Thyroid gland (tissue), 4 donors: ENCODE measurements at regions of chr1 and their contacts with region 1.

Region 1: DNA sequence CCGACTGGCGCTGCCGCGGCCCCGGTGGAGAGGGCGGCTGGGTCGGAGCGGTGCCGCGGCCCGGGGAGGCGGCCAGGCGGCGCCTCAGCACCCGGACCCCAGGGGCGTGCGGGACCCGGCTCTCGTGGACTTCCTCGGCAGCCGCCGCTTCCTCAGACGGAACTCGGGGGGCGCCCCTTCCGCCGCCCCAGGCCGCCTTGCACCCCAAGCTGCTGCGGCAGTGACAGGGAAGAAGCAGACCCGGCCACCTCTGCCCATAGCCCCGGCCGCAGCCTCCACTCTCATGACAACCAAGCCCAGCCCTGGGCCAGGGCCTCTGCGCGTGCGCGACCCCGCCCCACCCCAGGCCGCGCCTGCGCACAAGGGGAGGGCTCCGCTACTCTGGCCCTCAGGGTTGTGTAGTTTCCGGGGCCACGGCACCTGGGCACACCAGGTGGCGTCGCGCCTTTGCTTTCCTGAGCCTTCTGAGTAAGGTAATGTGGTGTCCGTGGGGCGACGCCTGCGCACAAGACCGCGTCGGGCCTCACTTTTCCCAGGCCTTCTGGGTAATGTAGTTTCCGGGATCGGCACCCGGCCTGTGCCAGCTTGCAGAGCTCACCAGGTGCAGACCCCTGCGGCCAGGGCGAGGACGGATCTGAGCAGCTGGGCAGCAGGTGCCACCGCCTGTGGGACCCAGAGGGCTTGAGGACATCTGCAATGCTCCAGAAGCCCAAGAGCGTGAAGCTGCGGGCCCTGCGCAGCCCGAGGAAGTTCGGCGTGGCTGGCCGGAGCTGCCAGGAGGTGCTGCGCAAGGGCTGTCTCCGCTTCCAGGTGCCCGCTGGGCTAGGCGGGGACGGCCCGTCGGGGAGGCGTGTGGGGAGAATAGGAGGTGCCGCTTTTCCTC is at the starts of genes CEP104 and DFFB:
- DNase-seq: peak; percentile 99
- H3K4me3 ChIP-seq: peak within 1 kb of the TSS; percentile 56 to 89 (median 64)
- H3K27ac ChIP-seq: peak within 1 kb of the TSS; percentile 60 to 72 (median 63)
- H3K4me1 ChIP-seq: peaks cover 18 to 23% of the 10 kb centered on the region in 2 donors
- H3K27me3 ChIP-seq: no peaks in the 10 kb centered on the region
- CTCF ChIP-seq: peak in 4 of 6 experiments; percentile 32 to 72 (median 46)
- POLR2A ChIP-seq: peak; percentile 35 to 92
- total RNA-seq, gene CEP104: 26.0 to 41.6 (median 30.8) TPM
- total RNA-seq, gene DFFB: 5.1 to 8.6 (median 6.8) TPM

Region 2: GRCh38 chr1:3899754-3900118 is 42.6 kb after region 1 on chr1:
- intact Hi-C with region 1: loop called (anchors 5 kb)
- DNase-seq: peak in 1 of 2 donors; percentile 12
- H3K4me3 ChIP-seq: peak overlapping the region; percentile 52 to 95 (median 78)
- H3K27ac ChIP-seq: peak overlapping the region; percentile 88 to 99 (median 97)
- H3K4me1 ChIP-seq: peaks cover 4 to 10% of the 10 kb centered on the region in 2 donors
- H3K27me3 ChIP-seq: no peaks in the 10 kb centered on the region
- CTCF ChIP-seq: peak in 1 of 6 experiments; percentile 7
- POLR2A ChIP-seq: no peak

Region 3: GRCh38 chr1:4267381-4268261 is 410.5 kb after region 1 on chr1:
- intact Hi-C with region 1: no loop called
- DNase-seq: no peak
- H3K4me3 ChIP-seq: no peak overlapping the region
- H3K27ac ChIP-seq: no peak overlapping the region
- H3K4me1 ChIP-seq: no peaks in the 10 kb centered on the region
- H3K27me3 ChIP-seq: no peaks in the 10 kb centered on the region
- CTCF ChIP-seq: no peak
- POLR2A ChIP-seq: no peak